ENCODE measurements at regions of chr1 and their contacts with region 1.

Region 1: DNA sequence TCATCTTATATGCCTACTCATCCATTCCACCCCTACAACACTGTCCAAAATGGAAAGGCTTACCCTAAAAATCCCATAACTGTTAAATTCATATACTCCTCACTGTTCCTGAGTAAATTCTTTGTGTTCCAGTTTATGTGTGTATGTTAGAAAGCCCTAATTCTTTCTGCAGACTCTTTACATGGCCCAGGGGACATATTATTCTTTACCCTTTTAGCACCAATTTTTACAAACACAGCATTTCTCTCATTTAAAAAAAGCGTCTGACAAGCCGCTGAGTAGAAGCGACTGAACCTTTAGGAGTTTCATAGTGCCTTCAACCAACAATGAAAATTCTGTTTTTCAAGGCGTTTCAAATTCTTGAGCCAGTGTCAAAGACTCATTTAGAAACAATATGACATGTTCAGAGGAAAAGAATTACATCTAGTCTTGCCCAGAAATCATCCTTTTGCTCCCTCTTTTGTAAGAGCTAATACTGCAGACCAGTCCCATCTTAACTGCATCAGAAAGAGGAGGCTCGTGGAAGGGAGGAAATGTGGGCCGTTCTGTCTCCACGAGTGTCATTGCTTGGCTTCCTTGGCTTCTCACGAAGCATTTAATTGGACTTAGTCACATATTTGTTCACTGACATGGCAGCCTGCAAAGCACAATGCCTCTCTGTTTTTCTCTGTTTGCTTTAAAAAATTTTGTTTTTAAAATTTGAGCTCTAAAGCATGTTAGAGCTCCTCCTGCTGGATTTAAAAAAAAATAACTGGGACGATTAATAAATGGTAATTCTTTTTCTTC is 21.3 kb upstream of the C1orf105 start:
- DNase-seq: peak; percentile 100
- ATAC-seq: peak; percentile 91
- H3K4me3 ChIP-seq: peak overlapping the region; percentile 1; the same call in 1 of the 2 replicates
- H3K27ac ChIP-seq: peak overlapping the region; percentile 59
- H3K4me1 ChIP-seq: peaks cover 49% of the 10 kb centered on the region
- H3K27me3 ChIP-seq: no peaks in the 10 kb centered on the region
- CTCF ChIP-seq: peak; percentile 99

Region 2: DNA sequence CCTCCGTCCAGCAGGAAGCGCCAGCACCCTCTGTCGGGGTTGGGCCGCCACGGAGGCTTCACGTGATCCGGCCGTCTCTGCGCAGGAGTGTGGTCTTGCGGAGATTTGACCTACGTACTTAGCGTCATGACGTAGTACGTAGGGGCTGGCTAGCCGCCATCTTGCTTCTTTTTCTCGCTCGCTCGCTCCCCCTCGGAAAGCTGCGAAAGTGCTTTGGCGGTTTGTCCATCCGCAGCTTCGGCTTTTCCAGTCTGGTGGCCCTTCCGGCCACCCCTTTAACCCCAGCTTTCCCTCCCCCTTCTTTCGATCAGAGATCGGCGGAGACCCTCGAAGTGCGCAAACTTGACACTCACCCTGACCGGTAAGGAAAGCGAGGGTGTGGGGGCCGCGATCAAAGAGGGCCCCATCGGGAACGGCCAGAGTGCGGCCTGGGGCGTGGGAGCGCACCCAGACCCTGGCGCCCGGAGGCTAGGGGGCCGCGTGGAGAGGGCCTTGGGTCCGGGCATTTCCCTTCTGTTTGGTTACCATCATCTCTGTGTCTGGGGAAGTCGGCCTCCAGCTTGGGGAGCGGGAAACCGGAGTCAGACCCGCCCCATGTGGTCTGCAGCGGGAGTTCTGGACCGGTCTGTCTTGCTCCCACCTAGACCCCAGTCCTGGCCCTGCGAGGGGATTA is 913.7 kb before region 1 on chr1 and contains the start of gene PRRC2C:
- CTCF ChIA-PET with region 1: no interaction called
- POLR2A ChIA-PET with region 1: interaction called, 3 read pairs
- intact Hi-C with region 1: loop called (anchors 1 kb)
- DNase-seq: peak; percentile 100
- ATAC-seq: peak; percentile 95
- H3K4me3 ChIP-seq: peak within 1 kb of the TSS; percentile 82
- H3K27ac ChIP-seq: peak within 1 kb of the TSS; percentile 84
- H3K4me1 ChIP-seq: peaks cover 33% of the 10 kb centered on the region
- H3K27me3 ChIP-seq: no peaks in the 10 kb centered on the region
- CTCF ChIP-seq: no peak; the same call in 1 of the 2 replicates
- total RNA-seq, gene PRRC2C: 199 and 225 TPM in 2 replicates

Region 3: DNA sequence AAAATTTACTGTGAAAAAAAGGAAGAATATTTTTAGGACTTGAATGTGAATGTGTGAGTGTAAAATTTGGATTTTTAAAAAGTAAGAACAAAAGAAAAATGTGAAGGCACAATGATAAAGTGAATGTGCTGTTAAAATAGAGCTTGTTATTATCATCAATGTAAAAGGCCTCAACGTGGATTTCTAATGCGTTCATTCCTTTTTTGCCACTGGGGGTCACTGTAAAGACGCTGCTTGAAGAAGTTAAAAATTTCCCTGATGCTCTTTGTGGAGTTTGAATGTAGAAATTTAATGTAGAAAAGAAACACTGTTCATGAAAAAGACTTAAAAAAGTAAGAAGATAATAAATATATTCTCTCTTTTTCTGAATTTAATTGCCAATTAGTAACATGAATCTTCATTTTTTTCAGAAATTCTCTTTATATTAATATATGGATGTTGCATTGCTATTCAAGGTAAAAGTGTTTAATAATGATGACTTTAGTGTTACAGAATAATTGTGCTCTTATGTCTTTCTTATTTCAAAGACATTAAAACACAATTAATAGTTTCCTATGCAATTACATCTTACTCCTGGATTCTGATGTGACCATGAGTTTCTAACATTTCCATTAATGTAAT is 396.3 kb before region 1 on chr1:
- CTCF ChIA-PET with region 1: interaction called, 43 read pairs
- POLR2A ChIA-PET with region 1: interaction called, 3 read pairs
- intact Hi-C with region 1: loop called (anchors 1 kb)
- DNase-seq: peak; percentile 94
- ATAC-seq: peak; percentile 45
- H3K4me3 ChIP-seq: no peak overlapping the region
- H3K27ac ChIP-seq: no peak overlapping the region
- H3K4me1 ChIP-seq: peaks cover 29% of the 10 kb centered on the region
- H3K27me3 ChIP-seq: no peaks in the 10 kb centered on the region
- CTCF ChIP-seq: peak; percentile 100

Region 4: GRCh38 chr1:172135076-172135672 is 264.0 kb before region 1 on chr1:
- CTCF ChIA-PET with region 1: interaction called, 3 read pairs
- POLR2A ChIA-PET with region 1: no interaction called
- intact Hi-C with region 1: loop called (anchors 1 kb)
- DNase-seq: peak; percentile 76
- ATAC-seq: 0 out of 2 replicates have a peak, but pooled peaks have one; percentile 29
- H3K4me3 ChIP-seq: no peak overlapping the region
- H3K27ac ChIP-seq: no peak overlapping the region
- H3K4me1 ChIP-seq: peaks cover 12% of the 10 kb centered on the region; the same call in 1 of the 2 replicates
- H3K27me3 ChIP-seq: no peaks in the 10 kb centered on the region
- CTCF ChIP-seq: peak; percentile 99

Region 5: GRCh38 chr1:172322219-172323061 is 76.7 kb before region 1 on chr1:
- CTCF ChIA-PET with region 1: interaction called, 4 read pairs
- POLR2A ChIA-PET with region 1: no interaction called
- intact Hi-C with region 1: loop called (anchors 1 kb)
- DNase-seq: peak; percentile 97
- ATAC-seq: peak; percentile 76
- H3K4me3 ChIP-seq: peak overlapping the region; percentile 57
- H3K27ac ChIP-seq: peak overlapping the region; percentile 88
- H3K4me1 ChIP-seq: peaks cover 53% of the 10 kb centered on the region
- H3K27me3 ChIP-seq: no peaks in the 10 kb centered on the region
- CTCF ChIP-seq: peak; percentile 37; the same call in 1 of the 2 replicates